ENCODE measurements at regions of chr17 and their contacts with region 1.

Region 1: DNA sequence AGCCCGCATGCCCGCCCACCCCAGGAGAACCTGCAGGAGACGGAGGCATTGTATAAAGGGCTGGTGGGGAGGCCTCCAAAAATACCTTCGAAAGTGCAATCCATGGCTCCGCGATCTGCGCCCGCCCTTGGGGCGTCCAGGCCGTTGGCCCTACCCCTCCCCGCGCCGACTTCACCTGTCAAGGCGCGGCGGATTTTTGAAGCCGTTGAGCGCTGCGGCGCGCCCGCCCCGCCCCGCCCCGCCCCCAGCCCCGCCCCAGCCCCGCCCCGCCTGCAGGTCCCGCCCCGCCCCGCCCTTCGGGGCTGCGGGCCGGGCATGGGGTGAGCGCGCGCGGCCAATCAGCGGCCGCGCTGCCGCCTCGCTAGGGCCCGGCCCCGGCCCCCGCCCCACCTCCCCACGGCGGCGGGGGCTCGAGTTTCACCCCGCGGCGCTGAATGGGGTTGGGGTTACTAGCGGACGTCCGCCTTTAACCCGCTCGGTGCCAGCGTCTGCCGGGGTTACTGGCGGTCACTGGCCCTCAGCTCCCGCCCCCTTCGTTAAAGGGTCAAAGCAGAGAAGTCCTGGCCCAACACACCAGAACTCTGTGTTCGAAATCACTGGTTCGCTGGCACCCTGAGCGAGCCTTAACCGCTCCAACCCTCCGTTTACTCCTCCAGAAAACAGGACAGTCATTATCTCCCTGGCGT is 13.2 kb downstream of the SREBF1 start:
- DNase-seq: peak; percentile 19 to 87
- H3K4me3 ChIP-seq: peak overlapping the region; percentile 51 to 62
- H3K27ac ChIP-seq: peak overlapping the region; percentile 64 to 72
- H3K4me1 ChIP-seq: peaks cover 37 to 38% of the 10 kb centered on the region in 2 donors
- H3K27me3 ChIP-seq: no peaks in the 10 kb centered on the region
- CTCF ChIP-seq: no peak

Region 2: DNA sequence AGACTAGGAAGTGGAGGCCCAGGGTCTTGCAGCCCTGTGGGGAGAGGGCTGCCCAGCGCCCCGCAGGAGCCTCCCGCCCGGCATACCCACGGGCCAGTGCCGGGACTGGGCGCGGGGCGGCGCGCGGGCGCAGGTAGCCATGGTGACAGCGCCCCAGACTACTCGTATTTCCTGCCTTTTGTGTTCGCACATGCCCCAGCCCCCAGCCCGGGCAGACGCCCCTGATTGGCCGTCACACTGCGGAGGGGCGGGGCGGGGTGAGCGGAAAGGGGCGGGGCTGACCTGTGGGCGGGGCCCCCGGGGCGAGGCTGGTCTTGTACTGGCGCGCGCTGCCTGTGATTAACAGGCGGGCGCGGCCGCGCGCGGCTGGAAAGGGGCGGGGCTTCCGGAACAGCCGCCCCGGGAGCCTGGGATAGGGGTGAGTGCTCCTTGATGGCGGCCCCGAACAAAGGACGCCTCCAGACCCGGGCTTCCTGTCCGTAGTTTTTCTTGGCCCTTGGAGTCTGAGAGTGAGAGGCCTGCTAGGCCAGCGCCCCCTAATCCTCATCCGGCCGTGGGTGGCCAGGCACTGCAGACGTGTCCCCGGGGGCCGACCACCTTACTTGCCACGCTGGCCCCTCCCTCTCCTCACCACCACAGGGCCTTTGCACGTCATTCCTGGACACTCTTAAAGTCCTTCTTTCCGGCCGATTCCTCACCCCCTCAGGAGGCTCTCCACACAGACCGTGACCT is 71.3 kb before region 1 on chr17:
- intact Hi-C with region 1: no loop called
- DNase-seq: peak; percentile 94 to 98
- H3K4me3 ChIP-seq: peak overlapping the region; percentile 40 to 61
- H3K27ac ChIP-seq: peak overlapping the region; percentile 56 to 77
- H3K4me1 ChIP-seq: peaks cover 7 to 22% of the 10 kb centered on the region in 2 donors
- H3K27me3 ChIP-seq: no peaks in the 10 kb centered on the region
- CTCF ChIP-seq: peak; percentile 4 to 42 (median 33)

Region 3: GRCh38 chr17:17792551-17793377 is 30.8 kb before region 1 on chr17:
- intact Hi-C with region 1: no loop called
- DNase-seq: no peak
- H3K4me3 ChIP-seq: no peak overlapping the region
- H3K27ac ChIP-seq: no peak overlapping the region
- H3K4me1 ChIP-seq: no peaks in the 10 kb centered on the region
- H3K27me3 ChIP-seq: no peaks in the 10 kb centered on the region
- CTCF ChIP-seq: no peak

Region 4: GRCh38 chr17:17836250-17836817 is 12.8 kb after region 1 on chr17:
- intact Hi-C with region 1: loop called (anchors 1 kb)
- DNase-seq: peak; percentile 90 to 98
- H3K4me3 ChIP-seq: peak overlapping the region; percentile 62 to 73
- H3K27ac ChIP-seq: peak overlapping the region; percentile 93 to 98
- H3K4me1 ChIP-seq: peaks cover 19 to 52% of the 10 kb centered on the region in 2 donors
- H3K27me3 ChIP-seq: no peaks in the 10 kb centered on the region
- CTCF ChIP-seq: no peak

Region 5: DNA sequence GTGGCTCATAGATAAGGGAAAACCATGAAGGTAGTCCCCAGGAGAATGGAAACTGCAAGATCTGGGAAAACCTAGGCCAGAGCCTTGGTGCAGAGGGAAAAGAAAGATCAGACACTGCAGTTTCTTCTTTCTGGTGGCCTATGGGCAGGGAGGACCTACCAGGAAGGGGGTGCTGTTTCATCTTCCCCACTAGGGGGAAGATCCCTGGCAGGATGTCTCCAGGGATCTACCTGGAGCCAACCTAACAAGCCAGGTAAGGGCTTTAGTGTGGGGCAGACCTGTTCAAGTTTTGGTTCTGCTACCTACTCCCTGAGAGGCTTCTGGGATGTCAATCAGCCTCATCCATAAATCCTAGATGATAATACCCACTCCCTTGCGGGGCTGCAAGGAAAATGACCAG is 127.2 kb after region 1 on chr17:
- intact Hi-C with region 1: no loop called
- DNase-seq: no peak
- H3K4me3 ChIP-seq: no peak overlapping the region
- H3K27ac ChIP-seq: no peak overlapping the region
- H3K4me1 ChIP-seq: no peaks in the 10 kb centered on the region
- H3K27me3 ChIP-seq: no peaks in the 10 kb centered on the region
- CTCF ChIP-seq: no peak

Measured in ascending aorta (tissue), 2 donors.